Right ventricle myocardium superior (tissue), 1 donor: ENCODE measurements at regions of chr18 and their contacts with region 1.

Region 1: GRCh38 chr18:35343936-35344735 is at the start of gene ZNF24:
- DNase-seq: peak; percentile 98
- ATAC-seq: peak; percentile 99
- total RNA-seq, gene ZNF24: 44.4 TPM

Region 2: GRCh38 chr18:35239314-35239713 is 104.8 kb before region 1 on chr18:
- intact Hi-C with region 1: loop called (anchors 2 kb)
- DNase-seq: no peak
- ATAC-seq: no peak

Region 3: GRCh38 chr18:35290073-35290735 is 53.9 kb before region 1 on chr18 and contains the start of gene ZSCAN30:
- intact Hi-C with region 1: loop called (anchors 5 kb)
- DNase-seq: peak; percentile 96
- ATAC-seq: peak; percentile 100
- total RNA-seq, gene ZSCAN30: 12.0 TPM

Region 4: GRCh38 chr18:35441857-35442595 is 97.9 kb after region 1 on chr18:
- intact Hi-C with region 1: no loop called
- DNase-seq: no peak
- ATAC-seq: no peak